ENCODE measurements at regions of chr1 and their contacts with region 1.

Region 1: DNA sequence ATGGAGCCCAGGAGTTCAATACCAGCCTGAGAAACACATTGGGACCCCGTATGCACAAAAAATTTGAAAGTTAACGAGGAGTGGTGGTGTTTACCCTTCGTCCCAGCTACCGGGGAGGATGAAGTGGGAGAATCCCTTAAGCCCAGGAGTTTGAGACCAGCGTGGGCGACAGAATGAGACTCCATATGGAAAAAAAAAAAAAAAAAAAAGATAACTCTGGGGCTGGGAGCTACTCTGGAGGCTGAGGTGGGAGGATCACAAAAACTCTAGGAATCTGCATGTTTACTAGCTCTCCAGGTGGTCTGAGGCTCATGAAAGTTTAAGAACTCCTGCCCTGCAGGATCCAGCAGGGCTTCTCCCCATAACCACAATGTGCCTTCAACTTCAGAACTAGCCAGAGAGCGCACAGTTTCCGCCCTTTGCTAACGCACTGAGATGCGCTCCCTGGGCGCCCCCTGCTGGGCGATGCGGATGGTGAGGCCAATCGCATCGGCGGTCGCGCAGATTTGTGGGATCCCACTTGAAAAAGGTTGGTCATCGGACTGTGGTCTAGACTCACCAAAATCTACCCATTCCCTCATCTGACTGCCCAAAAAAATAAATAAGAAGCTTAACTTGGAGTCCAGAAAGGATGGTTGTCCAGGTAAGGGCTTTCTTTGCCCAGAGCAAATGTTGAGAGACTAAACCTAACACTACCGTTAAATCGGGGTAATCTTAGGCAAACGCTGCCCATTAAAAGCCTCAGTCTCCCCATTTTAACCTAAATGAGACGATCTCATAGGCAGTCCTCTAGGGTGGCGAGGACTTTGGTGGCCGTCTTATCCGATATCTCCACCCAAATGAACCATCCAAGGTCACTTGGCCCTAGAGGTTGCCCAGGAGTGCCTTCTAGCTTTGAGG is 8.8 kb downstream of the ZNF683 start:
- DNase-seq: peak; percentile 87
- H3K4me3 ChIP-seq: no peak overlapping the region
- H3K27ac ChIP-seq: no peak overlapping the region
- H3K4me1 ChIP-seq: peaks cover 11% of the 10 kb centered on the region
- H3K27me3 ChIP-seq: peaks cover 19% of the 10 kb centered on the region
- CTCF ChIP-seq: peak; percentile 91

Region 2: GRCh38 chr1:26284597-26285360 is 79.0 kb before region 1 on chr1:
- intact Hi-C with region 1: loop called (anchors 2 kb)
- DNase-seq: peak; percentile 74
- H3K4me3 ChIP-seq: no peak overlapping the region
- H3K27ac ChIP-seq: peak overlapping the region; percentile 34
- H3K4me1 ChIP-seq: peaks cover 15% of the 10 kb centered on the region
- H3K27me3 ChIP-seq: no peaks in the 10 kb centered on the region
- CTCF ChIP-seq: peak; percentile 82

Measured in colonic mucosa (tissue), 4 donors.